Activated naive CD4-positive, alpha-beta T cell treated with anti-CD3 and anti-CD28 coated beads for 36 hours (primary cell): ENCODE measurements at regions of chr1 and their contacts with region 1.

Region 1: GRCh38 chr1:3491291-3492246 is 37.1 kb downstream of the ARHGEF16 start:
- DNase-seq: peak; percentile 92
- H3K4me3 Mint-ChIP-seq: no peak overlapping the region
- H3K27ac Mint-ChIP-seq: no peak overlapping the region
- H3K4me1 Mint-ChIP-seq: peaks cover 5% of the 10 kb centered on the region
- H3K27me3 Mint-ChIP-seq: no peaks in the 10 kb centered on the region

Region 2: GRCh38 chr1:3453203-3453761 is 38.3 kb before region 1 on chr1:
- CTCF ChIA-PET with region 1: interaction called, 27 read pairs
- intact Hi-C with region 1: no loop called
- DNase-seq: peak; percentile 84
- H3K4me3 Mint-ChIP-seq: peak overlapping the region; percentile 32
- H3K27ac Mint-ChIP-seq: no peak overlapping the region
- H3K4me1 Mint-ChIP-seq: peaks cover 2% of the 10 kb centered on the region
- H3K27me3 Mint-ChIP-seq: peaks cover 7% of the 10 kb centered on the region

Region 3: GRCh38 chr1:3530926-3531818 is 39.6 kb after region 1 on chr1:
- CTCF ChIA-PET with region 1: interaction called, 5 read pairs
- intact Hi-C with region 1: loop called (anchors 1 kb)
- DNase-seq: peak; percentile 76
- H3K4me3 Mint-ChIP-seq: peak overlapping the region; percentile 74
- H3K27ac Mint-ChIP-seq: peak overlapping the region; percentile 68
- H3K4me1 Mint-ChIP-seq: peaks cover 10% of the 10 kb centered on the region
- H3K27me3 Mint-ChIP-seq: no peaks in the 10 kb centered on the region